Mammary epithelial cell (primary cell): ENCODE measurements at regions of chr3 and their contacts with region 1.

Region 1: DNA sequence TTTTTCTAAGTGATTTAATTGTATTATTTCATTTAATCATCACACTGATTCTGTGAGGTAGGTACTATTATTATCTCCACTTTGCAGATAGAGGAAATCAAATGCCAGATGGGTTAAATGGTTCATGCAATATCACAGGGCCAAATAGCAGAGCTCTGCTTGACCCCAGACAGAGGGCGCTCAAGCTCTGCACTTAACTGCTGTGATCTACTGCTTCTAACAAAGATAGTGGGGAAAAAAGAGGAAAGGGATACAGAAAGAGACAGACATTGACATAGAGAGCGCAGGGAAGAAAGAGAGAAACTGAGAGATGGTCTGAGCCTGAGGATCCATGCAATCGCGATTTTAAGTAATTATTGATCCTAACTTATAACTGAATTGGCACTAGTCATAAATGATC is 279.1 kb upstream of the THRB start:
- DNase-seq: peak; percentile 52
- H3K4me3 ChIP-seq: no peak overlapping the region
- H3K27ac ChIP-seq: no peak overlapping the region
- H3K4me1 ChIP-seq: no peaks in the 10 kb centered on the region
- H3K27me3 ChIP-seq: no peaks in the 10 kb centered on the region
- CTCF ChIP-seq: peak; percentile 88 to 90

Region 2: DNA sequence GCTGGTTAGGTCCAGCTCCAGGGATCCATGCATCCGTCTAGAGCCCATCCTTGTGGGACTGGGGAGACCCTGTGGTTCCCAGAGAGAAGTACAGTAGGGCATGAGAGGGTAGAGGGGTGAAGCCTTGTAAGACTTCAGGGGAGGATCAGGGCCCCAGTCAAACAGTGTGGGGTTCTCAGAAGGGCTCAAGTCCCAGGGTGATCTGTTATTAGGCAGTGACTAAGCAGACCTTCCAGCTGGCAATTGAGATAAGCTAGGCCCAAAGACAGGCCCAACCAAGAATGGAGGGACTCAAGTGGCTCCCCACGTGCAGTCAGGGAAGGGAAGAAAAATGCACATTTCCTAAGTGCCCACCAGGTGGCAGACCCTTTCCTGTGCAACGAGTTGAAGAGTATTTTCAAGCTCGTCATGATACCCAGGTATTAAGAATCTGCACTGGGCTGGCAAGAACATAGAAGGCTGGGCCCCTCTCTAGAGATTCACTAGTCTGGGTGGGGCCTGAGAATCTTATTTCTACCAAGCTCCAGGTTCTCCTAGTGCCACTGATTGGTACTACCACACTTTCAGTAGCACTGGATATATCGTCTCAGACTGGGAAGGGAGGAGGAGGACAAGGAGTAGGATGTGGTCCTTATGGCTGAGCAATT is 587.9 kb before region 1 on chr3:
- CTCF ChIA-PET with region 1: no interaction called
- dilution Hi-C with region 1: no loop called
- in situ Hi-C with region 1: no loop called
- intact Hi-C with region 1: loop called (anchors 5 kb)
- DNase-seq: peak; percentile 58
- H3K4me3 ChIP-seq: no peak overlapping the region
- H3K27ac ChIP-seq: no peak overlapping the region
- H3K4me1 ChIP-seq: no peaks in the 10 kb centered on the region
- H3K27me3 ChIP-seq: no peaks in the 10 kb centered on the region
- CTCF ChIP-seq: peak; percentile 64 to 66

Region 3: DNA sequence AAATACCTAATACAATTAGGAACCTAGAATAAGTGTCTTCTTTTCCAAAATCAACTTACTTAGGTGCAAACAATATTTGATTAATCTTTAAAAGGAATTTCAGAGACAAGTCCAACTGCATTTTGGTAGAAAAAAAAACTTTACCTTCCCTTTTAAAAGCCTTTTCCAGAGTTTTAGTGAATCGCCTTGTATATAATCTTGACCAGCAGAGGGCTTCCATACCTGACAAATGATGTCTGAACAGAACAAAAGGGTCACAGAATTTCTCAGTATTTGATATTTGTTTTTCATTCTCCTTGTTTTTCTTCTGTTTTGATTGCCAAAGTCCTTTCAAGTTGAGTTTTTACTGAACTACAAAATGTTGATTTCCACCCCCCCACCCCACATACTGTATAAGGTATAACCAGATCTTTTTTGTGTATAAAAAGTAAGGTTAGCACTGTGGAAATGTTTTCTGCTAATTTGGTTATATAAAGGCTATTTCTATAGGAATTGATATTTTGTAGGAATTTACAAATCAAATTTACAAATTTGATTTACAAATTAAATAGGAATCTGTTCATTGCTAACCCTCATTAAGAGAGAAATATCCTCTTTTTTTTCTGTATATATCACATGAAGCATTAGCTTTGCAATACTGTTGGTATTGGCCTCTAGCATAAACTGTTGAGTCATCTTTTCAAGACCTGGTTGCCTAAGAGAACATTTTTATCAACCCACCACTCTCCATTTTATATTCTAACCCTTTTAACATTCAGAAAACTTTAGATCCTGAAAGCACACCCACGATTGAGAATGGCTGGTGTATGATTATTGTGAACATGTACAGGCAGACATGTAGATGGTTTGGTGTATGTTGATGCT is 190.2 kb after region 1 on chr3:
- CTCF ChIA-PET with region 1: no interaction called
- dilution Hi-C with region 1: no loop called
- in situ Hi-C with region 1: no loop called
- intact Hi-C with region 1: loop called (anchors 10 kb)
- DNase-seq: peak; percentile 9
- H3K4me3 ChIP-seq: no peak overlapping the region
- H3K27ac ChIP-seq: no peak overlapping the region
- H3K4me1 ChIP-seq: no peaks in the 10 kb centered on the region
- H3K27me3 ChIP-seq: no peaks in the 10 kb centered on the region
- CTCF ChIP-seq: peak; percentile 41 to 53

Region 4: GRCh38 chr3:25033407-25034029 is 259.7 kb after region 1 on chr3:
- CTCF ChIA-PET with region 1: no interaction called
- dilution Hi-C with region 1: no loop called
- in situ Hi-C with region 1: no loop called
- intact Hi-C with region 1: loop called (anchors 5 kb)
- DNase-seq: peak; percentile 35
- H3K4me3 ChIP-seq: no peak overlapping the region
- H3K27ac ChIP-seq: no peak overlapping the region
- H3K4me1 ChIP-seq: no peaks in the 10 kb centered on the region
- H3K27me3 ChIP-seq: no peaks in the 10 kb centered on the region
- CTCF ChIP-seq: peak; percentile 58 to 63

Region 5: GRCh38 chr3:25856902-25857518 is 1083.2 kb after region 1 on chr3:
- CTCF ChIA-PET with region 1: no interaction called
- dilution Hi-C with region 1: no loop called
- in situ Hi-C with region 1: no loop called
- intact Hi-C with region 1: loop called (anchors 5 kb)
- DNase-seq: peak; percentile 12
- H3K4me3 ChIP-seq: no peak overlapping the region
- H3K27ac ChIP-seq: no peak overlapping the region
- H3K4me1 ChIP-seq: peaks cover 4% of the 10 kb centered on the region
- H3K27me3 ChIP-seq: no peaks in the 10 kb centered on the region
- CTCF ChIP-seq: peak; percentile 65 to 83

Region 6: DNA sequence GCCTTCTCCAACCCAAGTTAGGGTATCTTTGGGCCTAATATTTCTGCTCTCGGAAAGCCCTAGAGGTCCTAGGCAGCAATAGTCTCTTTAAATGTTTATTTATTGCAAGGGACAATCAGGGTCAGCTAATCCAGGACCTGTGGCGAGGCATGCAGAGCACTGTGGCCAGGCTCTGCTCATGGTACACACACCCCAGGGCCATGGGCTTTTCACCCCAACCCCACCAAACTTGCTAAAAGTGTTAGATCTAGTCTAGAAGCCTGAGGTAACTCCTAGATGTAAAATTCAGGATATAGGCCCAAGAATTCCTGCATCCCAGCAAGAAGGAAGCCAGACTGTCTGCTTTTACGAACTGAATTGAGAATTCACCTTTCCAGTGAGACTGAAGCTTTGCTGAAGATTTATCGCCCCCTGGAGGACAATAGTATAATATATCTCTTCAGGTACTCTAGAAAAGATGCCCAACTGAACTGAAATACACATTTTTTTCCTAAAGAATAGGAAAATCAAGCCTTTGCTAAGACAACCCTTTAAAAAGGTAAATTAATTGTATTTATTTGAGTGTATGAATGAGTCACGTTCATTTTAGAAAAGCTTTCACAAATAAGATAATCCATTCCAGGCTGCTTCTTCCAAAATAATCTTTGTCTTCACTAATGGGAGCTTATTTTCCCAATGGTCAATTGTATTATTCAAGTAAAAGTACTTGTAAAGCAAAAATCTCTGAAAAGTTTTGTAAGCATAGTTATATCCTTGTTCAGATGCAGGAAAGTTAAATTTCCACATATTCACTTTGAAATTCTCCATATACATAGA is 1938.6 kb after region 1 on chr3:
- CTCF ChIA-PET with region 1: no interaction called
- dilution Hi-C with region 1: no loop called
- in situ Hi-C with region 1: no loop called
- intact Hi-C with region 1: loop called (anchors 5 kb)
- DNase-seq: peak; percentile 11
- H3K4me3 ChIP-seq: no peak overlapping the region
- H3K27ac ChIP-seq: no peak overlapping the region
- H3K4me1 ChIP-seq: no peaks in the 10 kb centered on the region
- H3K27me3 ChIP-seq: no peaks in the 10 kb centered on the region
- CTCF ChIP-seq: peak; percentile 51 to 65